ENCODE measurements at regions of chr3 and their contacts with region 1.

Region 1: GRCh38 chr3:196979545-196979944 is 10.9 kb upstream of the PIGZ start:
- DNase-seq: no peak
- ATAC-seq: no peak
- H3K4me3 ChIP-seq: no peak overlapping the region
- H3K4me3 Mint-ChIP-seq: no peak overlapping the region
- H3K27ac ChIP-seq: no peak overlapping the region
- H3K27ac Mint-ChIP-seq: no peak overlapping the region
- H3K4me1 ChIP-seq: peaks cover 0 to 6% of the 10 kb centered on the region in 2 donors
- H3K4me1 Mint-ChIP-seq: no peaks in the 10 kb centered on the region
- H3K27me3 ChIP-seq: peaks cover 0 to 4% (median 0%) of the 10 kb centered on the region in 4 experiments
- H3K27me3 Mint-ChIP-seq: peaks cover 38% of the 10 kb centered on the region
- CTCF ChIP-seq: no peak

Region 2: DNA sequence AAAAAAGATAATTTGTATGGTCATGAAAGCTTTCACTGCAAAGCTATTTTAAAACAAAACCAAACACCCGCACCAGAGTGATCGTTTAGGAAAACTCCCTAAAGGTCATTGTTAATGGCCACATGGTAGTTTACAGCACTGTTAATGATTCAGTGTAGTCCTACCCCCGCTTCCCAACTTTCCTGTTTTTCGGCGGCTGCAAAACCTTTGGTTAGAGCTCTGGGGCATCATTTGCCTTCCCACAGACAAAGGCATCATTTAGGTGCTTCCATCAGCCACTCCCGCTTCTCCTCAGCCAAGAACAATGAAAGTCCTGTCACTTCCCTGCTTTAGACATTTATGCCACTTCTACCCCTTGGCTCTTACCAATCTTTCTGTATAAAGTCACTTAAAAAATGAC is 39.5 kb after region 1 on chr3:
- CTCF ChIA-PET with region 1: no interaction called
- POLR2A ChIA-PET with region 1: no interaction called
- intact Hi-C with region 1: no loop called
- DNase-seq: no peak
- ATAC-seq: no peak
- H3K4me3 ChIP-seq: no peak overlapping the region
- H3K4me3 Mint-ChIP-seq: no peak overlapping the region
- H3K27ac ChIP-seq: no peak overlapping the region
- H3K27ac Mint-ChIP-seq: no peak overlapping the region
- H3K4me1 ChIP-seq: peaks cover 17 to 18% of the 10 kb centered on the region in 2 donors
- H3K4me1 Mint-ChIP-seq: peaks cover 20% of the 10 kb centered on the region
- H3K27me3 ChIP-seq: peaks cover 0 to 10% (median under 1%) of the 10 kb centered on the region in 4 experiments
- H3K27me3 Mint-ChIP-seq: peaks cover 10% of the 10 kb centered on the region
- CTCF ChIP-seq: no peak

Region 3: GRCh38 chr3:197029511-197030167 is 50.1 kb after region 1 on chr3 and contains the start of gene MELTF:
- CTCF ChIA-PET with region 1: interaction called, 5 read pairs
- POLR2A ChIA-PET with region 1: no interaction called
- intact Hi-C with region 1: loop called (anchors 1 kb)
- DNase-seq: peak; percentile 77
- ATAC-seq: peak; percentile 86
- H3K4me3 ChIP-seq: peak within 1 kb of the TSS in 4 of 5 experiments; percentile 31 to 52 (median 50)
- H3K4me3 Mint-ChIP-seq: peak within 1 kb of the TSS; percentile 81
- H3K27ac ChIP-seq: no peak within 1 kb of the TSS
- H3K27ac Mint-ChIP-seq: peak within 1 kb of the TSS; percentile 26
- H3K4me1 ChIP-seq: peaks cover 17 to 19% of the 10 kb centered on the region in 2 donors
- H3K4me1 Mint-ChIP-seq: peaks cover 20% of the 10 kb centered on the region
- H3K27me3 ChIP-seq: peaks cover 0 to 64% (median 14%) of the 10 kb centered on the region in 4 experiments
- H3K27me3 Mint-ChIP-seq: peaks cover 31% of the 10 kb centered on the region
- CTCF ChIP-seq: peak; percentile 92
- total RNA-seq, gene MELTF: 2.9 and 3.2 TPM in 2 replicates

Region 4: GRCh38 chr3:197186887-197187588 is 207.5 kb after region 1 on chr3:
- CTCF ChIA-PET with region 1: interaction called, 23 read pairs
- POLR2A ChIA-PET with region 1: no interaction called
- intact Hi-C with region 1: loop called (anchors 1 kb)
- DNase-seq: peak; percentile 74
- ATAC-seq: peak; percentile 69
- H3K4me3 ChIP-seq: no peak overlapping the region
- H3K4me3 Mint-ChIP-seq: no peak overlapping the region
- H3K27ac ChIP-seq: no peak overlapping the region
- H3K27ac Mint-ChIP-seq: no peak overlapping the region
- H3K4me1 ChIP-seq: no peaks in the 10 kb centered on the region
- H3K4me1 Mint-ChIP-seq: peaks cover 2% of the 10 kb centered on the region
- H3K27me3 ChIP-seq: no peaks in the 10 kb centered on the region
- H3K27me3 Mint-ChIP-seq: no peaks in the 10 kb centered on the region
- CTCF ChIP-seq: peak; percentile 97